WTC11 (cell line): ENCODE measurements at regions of chr16 and their contacts with region 1.

Region 1: GRCh38 chr16:67521095-67521804 is 7.4 kb upstream of the RIPOR1 start:
- DNase-seq: peak; percentile 99
- ATAC-seq: peak; percentile 88
- H3K4me3 Mint-ChIP-seq: peak overlapping the region; percentile 84
- H3K27ac Mint-ChIP-seq: peak overlapping the region; percentile 95
- H3K4me1 Mint-ChIP-seq: no peaks in the 10 kb centered on the region
- H3K27me3 Mint-ChIP-seq: peaks cover 88% of the 10 kb centered on the region
- CTCF ChIP-seq: peak; percentile 72

Region 2: DNA sequence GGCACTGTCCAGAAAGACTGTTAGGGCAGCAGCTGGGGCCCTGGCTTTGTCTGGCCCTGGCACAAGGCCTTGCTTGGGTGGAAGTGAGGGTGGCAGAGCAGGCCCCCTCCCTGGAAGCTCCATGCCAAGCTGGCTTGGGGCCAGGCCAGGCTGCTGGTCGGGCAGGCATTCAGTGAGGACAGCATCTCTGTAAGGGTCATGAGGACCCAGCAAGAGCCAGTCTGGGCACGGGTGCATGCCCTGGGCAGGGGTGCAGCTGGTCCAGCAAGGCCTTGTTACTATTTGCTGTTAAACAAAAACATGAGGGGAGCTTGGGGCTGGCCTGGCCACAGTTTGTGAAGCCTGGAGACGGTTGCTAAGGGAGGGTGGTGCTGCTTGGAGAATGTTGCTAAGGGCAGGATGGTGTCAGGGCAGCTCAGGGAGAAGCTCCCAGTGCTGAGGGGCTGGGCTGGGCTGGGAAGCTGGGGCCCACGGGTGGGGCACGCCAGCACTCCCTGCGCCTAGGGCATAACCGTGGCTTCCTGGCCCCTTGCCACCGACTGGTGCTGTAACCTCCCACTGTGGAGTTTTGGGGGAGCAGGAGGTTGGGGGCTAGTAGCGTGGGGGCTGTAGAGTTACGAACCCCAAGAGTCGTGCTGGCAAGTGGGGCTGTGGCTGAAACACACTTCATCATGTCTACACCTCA is 129.7 kb before region 1 on chr16:
- CTCF ChIA-PET with region 1: no interaction called
- POLR2A ChIA-PET with region 1: no interaction called
- DNase-seq: no peak
- ATAC-seq: no peak
- H3K4me3 Mint-ChIP-seq: no peak overlapping the region
- H3K27ac Mint-ChIP-seq: no peak overlapping the region
- H3K4me1 Mint-ChIP-seq: peaks cover 24% of the 10 kb centered on the region
- H3K27me3 Mint-ChIP-seq: peaks cover 55% of the 10 kb centered on the region
- CTCF ChIP-seq: no peak

Region 3: GRCh38 chr16:67490335-67491096 is 30.7 kb before region 1 on chr16:
- CTCF ChIA-PET with region 1: interaction called, 45 read pairs
- POLR2A ChIA-PET with region 1: no interaction called
- DNase-seq: no peak
- ATAC-seq: no peak
- H3K4me3 Mint-ChIP-seq: no peak overlapping the region
- H3K27ac Mint-ChIP-seq: no peak overlapping the region
- H3K4me1 Mint-ChIP-seq: peaks cover 11% of the 10 kb centered on the region
- H3K27me3 Mint-ChIP-seq: peaks cover 99% of the 10 kb centered on the region
- CTCF ChIP-seq: no peak

Region 4: GRCh38 chr16:67546761-67547422 is 25.6 kb after region 1 on chr16:
- CTCF ChIA-PET with region 1: interaction called, 184 read pairs
- POLR2A ChIA-PET with region 1: no interaction called
- DNase-seq: peak; percentile 88
- ATAC-seq: peak; percentile 68
- H3K4me3 Mint-ChIP-seq: no peak overlapping the region
- H3K27ac Mint-ChIP-seq: no peak overlapping the region
- H3K4me1 Mint-ChIP-seq: peaks cover 7% of the 10 kb centered on the region
- H3K27me3 Mint-ChIP-seq: peaks cover 12% of the 10 kb centered on the region
- CTCF ChIP-seq: peak; percentile 93

Region 5: GRCh38 chr16:67653128-67653786 is 132.0 kb after region 1 on chr16:
- CTCF ChIA-PET with region 1: interaction called, 60 read pairs
- POLR2A ChIA-PET with region 1: no interaction called
- DNase-seq: no peak
- ATAC-seq: peak; percentile 28
- H3K4me3 Mint-ChIP-seq: peak overlapping the region; percentile 72
- H3K27ac Mint-ChIP-seq: no peak overlapping the region
- H3K4me1 Mint-ChIP-seq: peaks cover 12% of the 10 kb centered on the region
- H3K27me3 Mint-ChIP-seq: peaks cover 69% of the 10 kb centered on the region
- CTCF ChIP-seq: no peak

Region 6: DNA sequence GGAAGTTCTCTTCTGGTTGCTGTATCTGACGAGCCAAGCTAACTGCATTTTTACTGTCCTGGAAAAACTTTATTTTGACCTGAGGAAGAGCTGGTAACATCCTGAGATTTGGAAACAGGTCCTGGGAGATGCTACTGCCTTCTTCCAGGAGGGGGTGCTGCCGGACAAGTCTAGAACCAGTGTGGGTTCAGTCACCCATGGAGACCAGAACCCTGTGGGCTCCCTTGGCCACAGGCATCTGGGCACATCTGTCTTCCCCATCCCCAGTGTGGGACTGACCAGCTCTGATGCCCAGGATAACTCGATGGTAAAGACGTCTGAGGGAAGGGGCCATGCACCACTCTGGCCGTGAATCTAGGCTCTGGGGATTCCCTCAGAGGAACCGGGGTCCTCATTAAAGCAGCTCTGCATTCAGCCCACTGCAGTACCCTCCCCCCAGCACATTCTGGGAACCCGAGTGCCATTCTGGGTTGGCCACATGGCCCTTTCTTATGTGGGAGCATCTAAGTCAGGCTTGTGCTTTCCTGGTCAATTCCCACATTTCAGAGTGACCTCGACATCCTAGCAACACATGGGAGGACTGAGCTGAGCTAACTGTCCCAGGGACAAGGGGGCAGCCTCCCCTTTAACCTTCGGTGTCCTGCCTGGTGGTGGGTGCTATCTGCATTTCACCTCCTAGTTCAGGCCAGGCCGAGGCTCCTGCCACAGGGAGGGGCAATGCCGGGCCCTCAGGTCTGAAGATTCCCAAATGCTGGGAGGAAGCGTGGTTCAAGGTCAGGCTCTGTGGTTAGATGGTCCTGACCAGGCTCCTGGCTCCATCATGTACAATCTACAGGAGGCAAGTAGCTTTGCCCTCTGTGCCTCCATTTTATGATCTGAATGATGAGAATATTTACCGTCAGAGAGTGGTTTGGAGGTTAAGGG is 151.8 kb after region 1 on chr16:
- CTCF ChIA-PET with region 1: interaction called, 92 read pairs
- POLR2A ChIA-PET with region 1: no interaction called
- DNase-seq: peak; percentile 79
- ATAC-seq: peak; percentile 62
- H3K4me3 Mint-ChIP-seq: no peak overlapping the region
- H3K27ac Mint-ChIP-seq: peak overlapping the region; percentile 30; the same call in 1 of the 2 replicates
- H3K4me1 Mint-ChIP-seq: no peaks in the 10 kb centered on the region; the same call in 1 of the 2 replicates
- H3K27me3 Mint-ChIP-seq: no peaks in the 10 kb centered on the region
- CTCF ChIP-seq: peak; percentile 62

Region 7: GRCh38 chr16:67750466-67750865 is 229.2 kb after region 1 on chr16:
- CTCF ChIA-PET with region 1: no interaction called
- POLR2A ChIA-PET with region 1: no interaction called
- DNase-seq: no peak
- ATAC-seq: no peak
- H3K4me3 Mint-ChIP-seq: no peak overlapping the region
- H3K27ac Mint-ChIP-seq: peak overlapping the region; percentile 19
- H3K4me1 Mint-ChIP-seq: peaks cover 8% of the 10 kb centered on the region; the same call in 1 of the 2 replicates
- H3K27me3 Mint-ChIP-seq: no peaks in the 10 kb centered on the region
- CTCF ChIP-seq: no peak